Natural killer cell (primary cell): ENCODE measurements at regions of chr2 and their contacts with region 1.

Region 1: DNA sequence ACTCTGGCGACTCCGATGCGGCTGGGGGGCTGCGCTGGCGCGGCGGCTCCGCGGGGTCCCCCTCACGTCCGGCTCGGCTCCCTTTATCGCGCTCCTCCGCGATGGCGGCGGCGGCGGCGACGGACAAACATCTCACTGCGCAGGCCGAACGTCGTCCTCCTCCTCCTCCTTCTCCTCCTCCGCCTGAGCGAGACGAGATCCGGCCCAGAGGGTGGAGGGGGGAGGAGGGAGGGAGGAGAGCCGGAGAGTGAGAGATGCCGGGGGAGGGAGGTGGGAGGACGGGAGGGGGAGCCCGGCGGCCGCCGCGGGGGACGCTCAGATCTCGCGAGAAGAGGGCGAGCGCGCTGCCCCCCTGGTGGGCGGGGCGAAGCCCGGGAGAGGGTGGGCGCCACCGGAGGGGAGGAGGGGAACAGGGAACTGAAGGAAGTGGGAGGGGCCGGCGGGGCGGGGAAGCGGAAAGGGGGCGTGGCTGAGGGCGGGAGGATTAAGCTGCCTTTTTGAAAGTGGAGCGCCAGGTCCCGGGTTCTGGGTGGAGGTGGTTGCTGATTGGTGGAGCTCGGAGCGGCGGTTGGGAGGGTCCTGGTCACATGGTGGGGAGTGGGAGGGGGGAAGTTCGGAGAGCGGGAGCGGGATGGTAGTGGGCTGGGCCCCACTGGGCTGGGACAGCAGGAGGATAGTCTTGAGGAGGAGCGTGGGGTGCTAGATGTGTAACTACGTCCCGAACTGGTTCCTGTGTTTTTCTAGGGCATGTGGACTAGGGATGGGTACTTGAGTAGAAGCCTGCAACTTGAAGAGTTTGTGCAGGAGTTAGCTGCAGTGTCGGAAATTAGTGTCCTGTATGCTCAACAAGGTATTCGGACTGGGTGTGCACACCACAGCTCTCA is at the start of gene CUL3:
- DNase-seq: peak; percentile 97 to 99
- ATAC-seq: peak; percentile 86 to 96 (median 89)
- H3K4me3 ChIP-seq: peak within 1 kb of the TSS; percentile 95
- H3K4me3 Mint-ChIP-seq: peak within 1 kb of the TSS; percentile 97
- H3K27ac ChIP-seq: peak within 1 kb of the TSS; percentile 91
- H3K27ac Mint-ChIP-seq: peak within 1 kb of the TSS; percentile 86 to 96
- H3K4me1 ChIP-seq: peaks cover 27% of the 10 kb centered on the region
- H3K4me1 Mint-ChIP-seq: peaks cover 30 to 36% of the 10 kb centered on the region in 2 donors
- H3K27me3 ChIP-seq: no peaks in the 10 kb centered on the region
- H3K27me3 Mint-ChIP-seq: no peaks in the 10 kb centered on the region
- CTCF ChIP-seq: no peak
- total RNA-seq, gene CUL3: 102 to 125 (median 115) TPM

Region 2: GRCh38 chr2:224523626-224524577 is 61.5 kb before region 1 on chr2:
- intact Hi-C with region 1: loop called (anchors 1 kb)
- DNase-seq: peak in 1 of 2 donors; percentile 52
- ATAC-seq: peak; percentile 69 to 85 (median 77)
- H3K4me3 ChIP-seq: no peak overlapping the region
- H3K4me3 Mint-ChIP-seq: peak overlapping the region; percentile 83
- H3K27ac ChIP-seq: peak overlapping the region; percentile 76
- H3K27ac Mint-ChIP-seq: peak overlapping the region; percentile 85 to 90
- H3K4me1 ChIP-seq: peaks cover 21% of the 10 kb centered on the region
- H3K4me1 Mint-ChIP-seq: peaks cover 69% of the 10 kb centered on the region in 2 donors
- H3K27me3 ChIP-seq: no peaks in the 10 kb centered on the region
- H3K27me3 Mint-ChIP-seq: no peaks in the 10 kb centered on the region
- CTCF ChIP-seq: no peak

Region 3: DNA sequence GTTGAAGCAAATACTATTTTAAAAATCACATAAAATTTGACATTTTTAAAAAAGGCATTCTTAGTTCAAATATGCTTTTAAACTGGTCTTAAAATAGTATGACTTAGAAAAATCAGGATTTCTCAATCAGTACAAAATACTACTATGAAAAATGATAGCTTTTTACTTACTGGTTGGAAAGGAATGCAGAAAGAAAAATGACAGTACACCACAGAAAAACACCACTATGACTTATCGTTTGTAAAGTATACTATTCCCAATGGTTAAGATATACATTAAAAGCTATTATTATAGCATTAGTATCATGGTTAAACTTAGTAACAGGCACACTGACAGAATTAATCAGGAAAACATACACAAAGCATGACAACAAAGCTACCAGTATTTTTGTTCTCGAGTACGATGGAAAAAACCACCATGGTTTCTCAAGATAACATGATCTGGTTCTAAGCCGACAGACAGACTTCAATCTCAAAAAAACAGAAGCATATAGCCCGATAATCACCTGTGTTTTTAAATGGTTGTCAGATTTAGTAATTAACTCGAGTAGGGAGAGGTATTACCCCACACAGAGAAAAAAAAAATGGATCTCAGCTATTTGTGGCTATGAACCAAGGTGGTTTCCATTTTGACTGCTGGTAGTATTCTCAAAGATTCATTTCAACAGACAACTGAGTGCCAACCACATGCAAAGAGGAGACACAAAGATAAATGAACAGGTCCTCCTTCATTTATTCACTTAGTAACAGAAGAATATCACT is 39.4 kb before region 1 on chr2:
- intact Hi-C with region 1: loop called (anchors 5 kb)
- DNase-seq: peak in 1 of 2 donors; percentile 16
- ATAC-seq: peak in 2 of 3 donors; percentile 75 to 76
- H3K4me3 ChIP-seq: no peak overlapping the region
- H3K4me3 Mint-ChIP-seq: peak overlapping the region; percentile 35
- H3K27ac ChIP-seq: no peak overlapping the region
- H3K27ac Mint-ChIP-seq: peak overlapping the region; percentile 65 to 87
- H3K4me1 ChIP-seq: no peaks in the 10 kb centered on the region
- H3K4me1 Mint-ChIP-seq: peaks cover 42 to 46% of the 10 kb centered on the region in 2 donors
- H3K27me3 ChIP-seq: no peaks in the 10 kb centered on the region
- H3K27me3 Mint-ChIP-seq: no peaks in the 10 kb centered on the region
- CTCF ChIP-seq: no peak